ENCODE measurements at regions of chr1 and their contacts with region 1.

Region 1: GRCh38 chr1:171403371-171403770 is 82.0 kb upstream of the PRRC2C start:
- DNase-seq: peak; percentile 48 to 71
- H3K4me3 ChIP-seq: no peak overlapping the region
- H3K27ac ChIP-seq: peak overlapping the region; percentile 50
- H3K4me1 ChIP-seq: peaks cover 15% of the 10 kb centered on the region
- H3K27me3 ChIP-seq: no peaks in the 10 kb centered on the region
- CTCF ChIP-seq: no peak

Region 2: GRCh38 chr1:171251042-171251951 is 152.1 kb before region 1 on chr1:
- CTCF ChIA-PET with region 1: no interaction called
- POLR2A ChIA-PET with region 1: no interaction called
- intact Hi-C with region 1: loop called (anchors 10 kb)
- DNase-seq: no peak
- H3K4me3 ChIP-seq: no peak overlapping the region
- H3K27ac ChIP-seq: no peak overlapping the region
- H3K4me1 ChIP-seq: no peaks in the 10 kb centered on the region
- H3K27me3 ChIP-seq: peaks cover 5% of the 10 kb centered on the region
- CTCF ChIP-seq: no peak; the same call in 1 of the 2 replicates

Region 3: DNA sequence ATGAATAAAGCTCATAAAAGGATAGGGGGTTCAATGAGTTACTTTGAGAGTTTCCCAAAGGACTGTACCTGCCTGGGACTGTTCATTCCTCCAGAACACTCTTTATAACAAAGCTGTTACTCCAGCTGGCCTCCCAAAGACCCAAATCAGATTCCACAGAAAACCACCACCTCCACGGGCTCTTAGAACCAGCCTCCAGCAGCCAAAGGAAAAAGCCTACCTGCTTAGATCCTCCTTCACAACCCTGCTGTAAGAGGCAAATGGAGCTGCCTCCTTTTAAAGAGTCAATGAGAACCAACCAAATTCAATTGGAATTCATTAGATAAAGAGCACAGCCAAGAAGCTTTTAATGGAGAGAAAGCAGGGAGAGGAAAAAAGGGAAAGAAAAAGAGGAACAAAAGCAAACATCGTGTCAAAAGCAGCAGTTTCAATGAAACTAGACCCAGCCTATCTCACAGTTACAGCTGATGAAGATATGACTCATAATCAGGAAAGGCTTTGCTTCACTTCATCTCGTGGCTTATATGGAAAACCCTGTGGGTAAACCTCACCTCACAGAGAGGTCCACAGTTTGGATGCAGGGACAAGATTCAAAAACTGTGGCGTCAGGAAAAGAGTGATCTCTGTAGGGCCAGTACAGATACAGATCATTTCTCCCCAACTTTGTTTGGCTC is 117.2 kb before region 1 on chr1:
- CTCF ChIA-PET with region 1: no interaction called
- POLR2A ChIA-PET with region 1: no interaction called
- intact Hi-C with region 1: no loop called
- DNase-seq: no peak
- H3K4me3 ChIP-seq: no peak overlapping the region
- H3K27ac ChIP-seq: no peak overlapping the region
- H3K4me1 ChIP-seq: no peaks in the 10 kb centered on the region
- H3K27me3 ChIP-seq: no peaks in the 10 kb centered on the region
- CTCF ChIP-seq: no peak

Region 4: GRCh38 chr1:171367436-171367835 is 35.9 kb before region 1 on chr1:
- CTCF ChIA-PET with region 1: no interaction called
- POLR2A ChIA-PET with region 1: interaction called, 15 read pairs
- intact Hi-C with region 1: no loop called
- DNase-seq: no peak
- H3K4me3 ChIP-seq: no peak overlapping the region
- H3K27ac ChIP-seq: no peak overlapping the region
- H3K4me1 ChIP-seq: no peaks in the 10 kb centered on the region
- H3K27me3 ChIP-seq: no peaks in the 10 kb centered on the region
- CTCF ChIP-seq: no peak